Psoas muscle (tissue), 8 donors: ENCODE measurements at regions of chr19 and their contacts with region 1.

Region 1: GRCh38 chr19:52189735-52190486 is at the start of gene PPP2R1A:
- DNase-seq: peak; percentile 100
- ATAC-seq: peak; percentile 87 to 93 (median 90)
- H3K4me3 ChIP-seq: peak within 1 kb of the TSS; percentile 97
- H3K27ac ChIP-seq: peak within 1 kb of the TSS; percentile 98
- H3K4me1 ChIP-seq: peaks cover 49% of the 10 kb centered on the region
- H3K27me3 ChIP-seq: no peaks in the 10 kb centered on the region
- CTCF ChIP-seq: no peak
- total RNA-seq, gene PPP2R1A: 182 to 340 (median 268) TPM

Region 2: DNA sequence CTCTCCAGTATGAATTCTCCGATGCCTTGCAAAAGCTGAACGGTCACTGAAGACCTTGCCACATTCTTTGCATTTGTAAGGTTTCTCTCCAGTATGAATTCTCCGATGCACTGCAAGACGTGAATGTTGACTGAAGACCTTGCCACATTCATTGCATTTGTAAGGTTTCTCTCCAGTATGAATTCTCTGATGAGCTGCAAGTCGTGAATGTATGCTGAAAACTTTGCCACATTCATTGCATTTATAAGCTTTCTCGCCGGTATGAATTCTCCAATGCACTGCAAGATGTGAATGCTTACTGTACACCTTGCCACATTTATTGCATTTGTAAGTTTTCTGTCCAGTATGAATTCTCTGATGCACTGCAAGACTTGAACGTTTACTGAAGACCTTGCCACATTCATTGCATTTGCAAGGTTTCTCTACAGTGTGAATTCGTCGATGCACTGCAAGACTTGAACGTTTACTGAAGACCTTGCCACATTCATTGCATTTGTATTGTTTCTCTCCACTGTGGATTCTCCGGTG is 74.3 kb before region 1 on chr19:
- intact Hi-C with region 1: no loop called
- DNase-seq: no peak
- ATAC-seq: no peak
- H3K4me3 ChIP-seq: no peak overlapping the region
- H3K27ac ChIP-seq: no peak overlapping the region
- H3K4me1 ChIP-seq: no peaks in the 10 kb centered on the region
- H3K27me3 ChIP-seq: no peaks in the 10 kb centered on the region
- CTCF ChIP-seq: no peak

Region 3: GRCh38 chr19:52155596-52156359 is 34.1 kb before region 1 on chr19:
- intact Hi-C with region 1: no loop called
- DNase-seq: no peak
- ATAC-seq: no peak
- H3K4me3 ChIP-seq: no peak overlapping the region
- H3K27ac ChIP-seq: no peak overlapping the region
- H3K4me1 ChIP-seq: no peaks in the 10 kb centered on the region
- H3K27me3 ChIP-seq: no peaks in the 10 kb centered on the region
- CTCF ChIP-seq: no peak

Region 4: DNA sequence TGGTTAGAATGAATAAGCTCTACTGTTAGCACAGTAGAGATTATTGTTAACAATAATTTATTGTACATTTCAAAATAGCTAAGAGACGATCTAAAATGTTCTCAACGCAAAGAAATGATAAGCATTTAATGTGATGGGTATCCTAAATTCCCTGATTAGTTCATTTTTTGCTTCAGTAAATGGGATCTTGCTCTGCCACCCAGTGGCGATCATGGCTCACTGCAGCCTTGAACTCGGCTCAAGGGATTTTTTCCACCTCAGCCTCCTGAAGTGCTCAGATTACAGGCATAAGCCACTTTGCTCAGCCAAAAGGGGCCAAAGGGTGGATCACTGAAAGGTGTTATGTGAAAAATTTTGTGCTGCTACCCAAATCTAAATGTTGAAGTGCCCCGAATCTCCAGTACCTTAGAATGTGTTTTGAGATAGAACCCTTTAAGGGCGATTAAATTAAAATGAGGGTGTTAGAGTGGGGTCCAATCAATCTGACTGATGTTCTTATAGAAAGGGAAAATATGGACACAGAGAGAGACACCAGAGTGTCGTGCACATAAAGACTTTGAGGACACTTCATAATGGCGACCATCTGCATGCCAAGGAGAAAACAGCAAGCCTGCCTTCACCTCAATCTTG is 48.0 kb after region 1 on chr19:
- intact Hi-C with region 1: loop called (anchors 10 kb)
- DNase-seq: peak; percentile 33 to 64
- ATAC-seq: peak; percentile 76 to 87 (median 85)
- H3K4me3 ChIP-seq: no peak overlapping the region
- H3K27ac ChIP-seq: no peak overlapping the region
- H3K4me1 ChIP-seq: no peaks in the 10 kb centered on the region
- H3K27me3 ChIP-seq: no peaks in the 10 kb centered on the region
- CTCF ChIP-seq: peak; percentile 96

Region 5: GRCh38 chr19:52269338-52270261 is 79.7 kb after region 1 on chr19 and contains the start of gene ZNF766:
- intact Hi-C with region 1: no loop called
- DNase-seq: peak; percentile 98 to 99
- ATAC-seq: peak; percentile 100
- H3K4me3 ChIP-seq: peak within 1 kb of the TSS; percentile 100
- H3K27ac ChIP-seq: peak within 1 kb of the TSS; percentile 97
- H3K4me1 ChIP-seq: peaks cover 17% of the 10 kb centered on the region
- H3K27me3 ChIP-seq: no peaks in the 10 kb centered on the region
- CTCF ChIP-seq: no peak
- total RNA-seq, gene ZNF766: 6.3 to 10.4 (median 8.8) TPM